Heart left ventricle (tissue), 16 donors: ENCODE measurements at regions of chr7 and their contacts with region 1.

Region 1: DNA sequence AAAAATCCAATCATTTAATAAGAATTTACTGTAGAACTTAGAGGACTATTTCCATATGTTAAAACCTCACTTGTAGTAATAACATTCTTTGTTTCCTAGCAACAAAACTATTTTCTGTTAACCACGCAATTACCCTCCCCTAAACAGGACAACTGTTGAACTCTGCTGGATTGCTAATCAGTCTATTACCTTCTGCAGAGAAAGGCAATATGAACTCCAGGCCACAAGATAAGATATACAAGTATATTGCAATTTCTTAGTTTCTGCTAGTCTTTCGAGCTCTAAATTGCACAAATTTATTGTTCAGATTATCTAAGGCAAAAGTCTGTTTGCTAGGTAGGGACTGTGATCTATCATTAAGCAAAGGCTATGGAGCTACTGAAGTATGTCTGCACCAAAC is 920.1 kb upstream of the LRRN3 start:
- DNase-seq: no peak
- ATAC-seq: no peak
- H3K4me3 ChIP-seq: no peak overlapping the region
- H3K27ac ChIP-seq: no peak overlapping the region
- H3K4me1 ChIP-seq: no peaks in the 10 kb centered on the region
- H3K27me3 ChIP-seq: no peaks in the 10 kb centered on the region
- CTCF ChIP-seq: no peak
- POLR2A ChIP-seq: no peak

Region 2: GRCh38 chr7:109956916-109957315 is 213.9 kb before region 1 on chr7:
- intact Hi-C with region 1: no loop called
- DNase-seq: no peak
- ATAC-seq: no peak
- H3K4me3 ChIP-seq: no peak overlapping the region
- H3K27ac ChIP-seq: no peak overlapping the region
- H3K4me1 ChIP-seq: no peaks in the 10 kb centered on the region
- H3K27me3 ChIP-seq: no peaks in the 10 kb centered on the region
- CTCF ChIP-seq: no peak
- POLR2A ChIP-seq: no peak

Region 3: DNA sequence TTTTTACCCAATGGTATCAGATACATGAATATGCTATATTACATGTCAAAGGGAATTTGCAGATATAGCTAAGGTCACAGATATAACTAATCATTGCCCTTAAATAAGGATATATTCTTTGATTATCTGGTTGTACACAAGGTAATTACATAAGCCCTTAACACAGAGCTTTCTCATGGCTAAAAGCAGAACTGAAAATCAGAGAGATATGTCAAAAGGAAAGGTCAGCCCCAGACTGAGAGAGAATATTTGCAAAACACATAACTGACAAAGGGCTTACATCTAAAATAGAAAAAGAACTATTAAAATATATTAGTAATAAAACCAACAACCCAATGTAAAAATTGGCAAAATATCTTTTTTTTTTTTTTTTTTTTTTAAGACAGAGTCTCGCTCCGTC is 109.5 kb before region 1 on chr7:
- intact Hi-C with region 1: no loop called
- DNase-seq: no peak
- ATAC-seq: no peak
- H3K4me3 ChIP-seq: no peak overlapping the region
- H3K27ac ChIP-seq: no peak overlapping the region
- H3K4me1 ChIP-seq: no peaks in the 10 kb centered on the region
- H3K27me3 ChIP-seq: no peaks in the 10 kb centered on the region
- CTCF ChIP-seq: no peak
- POLR2A ChIP-seq: no peak

Region 4: GRCh38 chr7:110119883-110120581 is 50.8 kb before region 1 on chr7:
- intact Hi-C with region 1: loop called in 1 of 10 experiments (anchors 10 kb)
- DNase-seq: no peak
- ATAC-seq: no peak
- H3K4me3 ChIP-seq: no peak overlapping the region
- H3K27ac ChIP-seq: no peak overlapping the region
- H3K4me1 ChIP-seq: no peaks in the 10 kb centered on the region
- H3K27me3 ChIP-seq: no peaks in the 10 kb centered on the region
- CTCF ChIP-seq: no peak
- POLR2A ChIP-seq: no peak